Vagina (tissue), 2 donors: ENCODE measurements at regions of chr18 and their contacts with region 1.

Region 1: GRCh38 chr18:31722369-31722957 is 38.1 kb upstream of the B4GALT6 start:
- DNase-seq: no peak
- H3K4me3 ChIP-seq: no peak overlapping the region
- H3K27ac ChIP-seq: no peak overlapping the region
- H3K4me1 ChIP-seq: peaks cover 21% of the 10 kb centered on the region
- H3K27me3 ChIP-seq: no peaks in the 10 kb centered on the region
- CTCF ChIP-seq: peak; percentile 45 to 75 (median 62)
- POLR2A ChIP-seq: no peak

Region 2: DNA sequence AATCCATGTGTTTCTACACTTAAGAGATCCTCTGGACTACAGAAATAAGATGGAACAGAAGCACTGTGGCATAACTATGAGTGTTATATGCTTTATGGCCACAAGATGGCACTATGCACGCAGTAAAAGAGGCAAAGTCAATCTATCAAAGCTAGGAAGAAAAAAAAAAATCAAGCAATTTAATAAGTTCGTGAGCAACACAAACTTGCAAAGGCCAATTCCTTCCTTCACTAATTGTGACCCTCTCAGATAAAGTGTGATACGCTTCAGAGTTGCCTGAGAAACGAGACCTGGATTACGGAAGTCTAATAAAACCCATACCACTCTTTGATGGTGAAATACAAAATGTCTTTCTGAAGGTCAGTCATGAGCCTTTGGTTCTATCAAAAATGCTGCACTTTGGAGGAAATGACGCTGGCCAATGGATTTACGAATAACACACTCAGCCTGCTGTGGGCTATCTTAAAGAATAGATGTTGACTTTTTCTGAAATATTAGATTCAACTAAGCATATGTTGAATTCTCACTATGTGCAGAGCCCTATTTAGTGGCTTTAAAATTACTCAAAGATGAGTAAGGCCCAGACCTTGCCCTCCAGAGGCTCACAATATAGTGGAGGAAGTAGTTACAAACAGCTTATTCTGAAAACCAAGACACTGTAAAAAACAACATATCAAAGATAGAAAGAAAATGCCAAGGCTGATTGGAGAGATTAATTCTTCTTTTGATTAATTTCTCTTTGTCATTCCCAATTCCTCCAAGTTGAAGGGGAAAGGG is 166.3 kb before region 1 on chr18:
- intact Hi-C with region 1: loop called (anchors 10 kb)
- DNase-seq: no peak
- H3K4me3 ChIP-seq: no peak overlapping the region
- H3K27ac ChIP-seq: no peak overlapping the region
- H3K4me1 ChIP-seq: no peaks in the 10 kb centered on the region
- H3K27me3 ChIP-seq: no peaks in the 10 kb centered on the region
- CTCF ChIP-seq: peak; percentile 73 to 79 (median 79)
- POLR2A ChIP-seq: no peak

Region 3: DNA sequence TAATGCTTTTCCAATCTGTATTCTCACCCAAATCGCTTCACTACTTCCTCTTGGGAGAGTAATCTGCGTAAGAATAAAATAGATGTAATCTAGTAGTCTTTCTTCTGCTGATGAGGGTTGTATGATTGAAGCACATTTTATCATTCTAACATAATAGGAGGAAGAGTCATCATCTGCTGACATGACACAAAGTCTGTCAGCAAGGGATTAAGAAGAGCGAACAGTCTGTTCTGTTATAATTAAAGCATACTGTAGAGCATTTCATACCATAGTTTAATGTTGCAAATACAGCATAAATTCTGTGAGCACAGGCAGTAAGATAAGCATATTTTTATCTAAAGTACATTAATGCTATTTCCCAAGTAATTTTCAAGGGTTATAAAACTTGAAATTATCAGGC is 27.8 kb after region 1 on chr18:
- intact Hi-C with region 1: no loop called
- DNase-seq: no peak
- H3K4me3 ChIP-seq: no peak overlapping the region
- H3K27ac ChIP-seq: no peak overlapping the region
- H3K4me1 ChIP-seq: no peaks in the 10 kb centered on the region
- H3K27me3 ChIP-seq: no peaks in the 10 kb centered on the region
- CTCF ChIP-seq: no peak
- POLR2A ChIP-seq: no peak